B cell (primary cell): ENCODE measurements at regions of chr12 and their contacts with region 1.

Region 1: GRCh38 chr12:6927379-6928024 is at the start of gene ATN1:
- DNase-seq: peak; percentile 71
- ATAC-seq: peak; percentile 44
- H3K4me3 ChIP-seq: peak within 1 kb of the TSS; percentile 15 to 86 (median 83)
- H3K4me3 Mint-ChIP-seq: peak within 1 kb of the TSS; percentile 88
- H3K27ac ChIP-seq: peak within 1 kb of the TSS; percentile 69 to 84
- H3K27ac Mint-ChIP-seq: peak within 1 kb of the TSS; percentile 97
- H3K4me1 ChIP-seq: peaks cover 36 to 51% of the 10 kb centered on the region in 2 donors
- H3K4me1 Mint-ChIP-seq: peaks cover 56% of the 10 kb centered on the region
- H3K27me3 ChIP-seq: no peaks in the 10 kb centered on the region
- H3K27me3 Mint-ChIP-seq: no peaks in the 10 kb centered on the region
- CTCF ChIP-seq: no peak
- total RNA-seq, gene ATN1: 49.5 and 50.8 TPM in 2 replicates

Region 2: DNA sequence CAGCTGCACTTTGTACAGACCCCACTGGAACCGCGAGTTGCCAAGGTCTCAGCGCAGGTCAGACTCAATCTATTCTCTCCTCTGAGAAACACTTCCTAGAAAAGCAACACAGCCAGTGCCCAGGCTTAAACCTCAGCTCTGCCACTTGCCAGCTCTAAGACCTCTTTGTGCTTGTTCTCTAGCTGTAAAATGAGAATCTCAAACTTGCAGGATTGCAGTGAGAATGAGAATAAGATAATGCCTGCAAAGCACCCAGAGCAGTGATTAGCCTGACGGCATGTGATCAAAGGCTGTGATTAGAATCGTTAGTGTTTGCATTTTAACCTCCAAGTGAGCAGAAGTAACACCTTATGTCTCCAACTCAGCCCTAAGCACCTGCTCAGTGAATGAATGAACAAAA is 1003.8 kb before region 1 on chr12:
- CTCF ChIA-PET with region 1: no interaction called
- POLR2A ChIA-PET with region 1: no interaction called
- intact Hi-C with region 1: no loop called
- DNase-seq: no peak
- ATAC-seq: no peak
- H3K4me3 ChIP-seq: no peak overlapping the region
- H3K4me3 Mint-ChIP-seq: no peak overlapping the region
- H3K27ac ChIP-seq: no peak overlapping the region
- H3K27ac Mint-ChIP-seq: no peak overlapping the region
- H3K4me1 ChIP-seq: no peaks in the 10 kb centered on the region
- H3K4me1 Mint-ChIP-seq: no peaks in the 10 kb centered on the region
- H3K27me3 ChIP-seq: peaks cover 0 to 6% (median 0%) of the 10 kb centered on the region in 4 experiments
- H3K27me3 Mint-ChIP-seq: peaks cover 10% of the 10 kb centered on the region
- CTCF ChIP-seq: no peak

Region 3: DNA sequence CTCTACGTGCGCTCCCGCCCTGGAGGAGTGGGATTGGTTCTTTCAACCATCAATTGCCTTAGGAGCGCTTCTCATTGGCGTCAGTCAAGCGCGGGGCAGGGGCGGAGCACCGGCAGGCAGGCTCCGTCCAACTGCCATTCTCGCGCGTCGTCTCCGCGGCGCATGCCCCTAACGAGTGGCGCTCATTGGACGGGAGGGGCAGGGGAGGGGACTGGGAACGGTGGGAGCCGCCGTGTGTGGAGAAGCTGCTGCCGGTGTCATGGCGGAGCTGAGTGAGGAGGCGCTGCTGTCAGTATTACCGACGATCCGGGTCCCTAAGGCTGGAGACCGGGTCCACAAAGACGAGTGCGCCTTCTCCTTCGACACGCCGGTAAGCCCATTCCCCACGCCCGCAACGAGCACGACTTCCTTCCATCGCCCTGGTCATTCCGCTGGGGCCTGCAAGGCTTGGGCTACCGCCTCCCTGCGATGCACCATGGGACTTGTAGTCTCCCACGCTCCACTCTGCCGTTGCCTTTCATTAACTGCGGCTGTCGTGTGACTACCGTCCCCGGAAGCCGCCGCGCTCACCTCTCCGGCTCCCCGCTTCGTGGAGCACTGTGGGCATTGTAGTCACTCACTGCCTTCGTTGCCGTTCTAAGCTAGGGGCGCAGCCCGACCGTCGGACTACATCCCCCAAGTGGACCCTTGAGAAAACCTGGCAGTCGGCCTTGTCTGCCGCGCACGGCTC is 75.4 kb before region 1 on chr12 and contains the start of gene USP5:
- CTCF ChIA-PET with region 1: no interaction called
- POLR2A ChIA-PET with region 1: no interaction called
- intact Hi-C with region 1: no loop called
- DNase-seq: peak; percentile 100
- ATAC-seq: peak; percentile 76
- H3K4me3 ChIP-seq: peak within 1 kb of the TSS; percentile 85 to 98 (median 92)
- H3K4me3 Mint-ChIP-seq: peak within 1 kb of the TSS; percentile 92
- H3K27ac ChIP-seq: peak within 1 kb of the TSS; percentile 91
- H3K27ac Mint-ChIP-seq: peak within 1 kb of the TSS; percentile 93
- H3K4me1 ChIP-seq: peaks cover 6 to 23% of the 10 kb centered on the region in 2 donors
- H3K4me1 Mint-ChIP-seq: peaks cover 23% of the 10 kb centered on the region
- H3K27me3 ChIP-seq: no peaks in the 10 kb centered on the region
- H3K27me3 Mint-ChIP-seq: no peaks in the 10 kb centered on the region
- CTCF ChIP-seq: no peak
- total RNA-seq, gene USP5: 56.8 and 59.7 TPM in 2 replicates

Region 4: DNA sequence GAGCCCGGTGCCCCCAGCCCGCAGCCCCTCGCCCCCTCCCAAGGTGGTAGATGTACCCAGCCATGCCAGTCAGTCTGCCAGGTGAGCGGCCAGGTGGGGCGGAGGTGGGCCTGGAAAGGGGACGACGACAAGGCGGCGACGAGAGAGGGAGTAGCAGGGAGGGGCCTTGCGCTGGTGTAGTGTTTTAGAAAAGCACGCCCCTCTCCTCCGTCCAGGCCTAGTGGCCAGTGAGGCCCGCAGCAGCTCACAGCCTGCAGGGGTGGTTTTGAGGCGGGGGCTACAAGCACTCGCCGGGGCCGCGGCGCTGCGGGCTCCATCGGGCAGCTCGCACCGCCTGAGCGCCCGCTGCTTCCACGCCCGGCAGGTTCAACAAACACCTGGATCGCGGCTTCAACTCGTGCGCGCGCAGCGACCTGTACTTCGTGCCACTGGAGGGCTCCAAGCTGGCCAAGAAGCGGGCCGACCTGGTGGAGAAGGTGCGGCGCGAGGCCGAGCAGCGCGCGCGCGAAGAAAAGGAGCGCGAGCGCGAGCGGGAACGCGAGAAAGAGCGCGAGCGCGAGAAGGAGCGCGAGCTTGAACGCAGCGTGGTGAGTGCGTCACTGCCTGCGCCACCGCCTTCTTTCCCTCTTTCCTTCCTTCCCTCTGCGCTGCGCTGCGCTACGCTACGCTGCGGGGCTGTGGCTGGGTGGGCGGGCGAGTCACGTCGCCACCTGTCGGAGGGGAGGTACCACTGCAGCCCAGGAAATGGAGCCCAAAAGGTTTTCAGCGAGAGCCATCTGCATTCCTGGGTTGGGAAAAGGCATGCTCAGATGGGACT is 10.2 kb after region 1 on chr12:
- CTCF ChIA-PET with region 1: interaction called, 132 read pairs
- POLR2A ChIA-PET with region 1: interaction called, 37 read pairs
- intact Hi-C with region 1: loop called (anchors 1 kb)
- DNase-seq: peak; percentile 98
- ATAC-seq: peak; percentile 91
- H3K4me3 ChIP-seq: peak overlapping the region; percentile 28 to 94 (median 80)
- H3K4me3 Mint-ChIP-seq: peak overlapping the region; percentile 87
- H3K27ac ChIP-seq: peak overlapping the region; percentile 88 to 91
- H3K27ac Mint-ChIP-seq: peak overlapping the region; percentile 97
- H3K4me1 ChIP-seq: peaks cover 17 to 31% of the 10 kb centered on the region in 2 donors
- H3K4me1 Mint-ChIP-seq: peaks cover 37% of the 10 kb centered on the region
- H3K27me3 ChIP-seq: no peaks in the 10 kb centered on the region
- H3K27me3 Mint-ChIP-seq: no peaks in the 10 kb centered on the region
- CTCF ChIP-seq: peak; percentile 92

Region 5: GRCh38 chr12:6959058-6959804 is 31.7 kb after region 1 on chr12:
- CTCF ChIA-PET with region 1: interaction called, 119 read pairs
- POLR2A ChIA-PET with region 1: interaction called, 10 read pairs
- intact Hi-C with region 1: no loop called
- DNase-seq: peak; percentile 90
- ATAC-seq: peak; percentile 60
- H3K4me3 ChIP-seq: peak overlapping the region; percentile 40 to 57 (median 46)
- H3K4me3 Mint-ChIP-seq: peak overlapping the region; percentile 91
- H3K27ac ChIP-seq: peak overlapping the region; percentile 95 to 99
- H3K27ac Mint-ChIP-seq: peak overlapping the region; percentile 98
- H3K4me1 ChIP-seq: peaks cover 95 to 98% of the 10 kb centered on the region in 2 donors
- H3K4me1 Mint-ChIP-seq: peaks cover 93% of the 10 kb centered on the region
- H3K27me3 ChIP-seq: no peaks in the 10 kb centered on the region
- H3K27me3 Mint-ChIP-seq: no peaks in the 10 kb centered on the region
- CTCF ChIP-seq: no peak

Region 6: DNA sequence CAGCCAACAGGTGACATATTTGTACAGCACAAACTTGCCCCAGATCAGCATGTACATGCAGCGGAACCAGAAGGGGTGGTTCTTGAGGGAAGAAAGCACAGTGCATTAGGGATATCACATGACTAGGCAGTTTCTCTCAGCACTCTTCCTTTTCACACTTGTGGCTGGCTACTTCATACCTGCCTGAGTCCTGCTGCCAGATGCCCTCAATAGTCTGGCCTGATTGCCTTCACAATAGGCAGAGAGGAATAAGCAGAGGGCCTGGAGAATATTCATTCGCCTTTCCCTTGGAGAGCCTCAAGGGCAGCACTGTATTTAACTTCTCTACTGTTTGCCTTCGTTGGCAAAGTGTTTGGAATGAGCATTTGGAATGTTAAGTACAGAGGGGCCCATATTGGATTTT is 51.1 kb after region 1 on chr12:
- CTCF ChIA-PET with region 1: no interaction called
- POLR2A ChIA-PET with region 1: no interaction called
- intact Hi-C with region 1: no loop called
- DNase-seq: no peak
- ATAC-seq: no peak
- H3K4me3 ChIP-seq: no peak overlapping the region
- H3K4me3 Mint-ChIP-seq: no peak overlapping the region
- H3K27ac ChIP-seq: no peak overlapping the region
- H3K27ac Mint-ChIP-seq: no peak overlapping the region
- H3K4me1 ChIP-seq: no peaks in the 10 kb centered on the region
- H3K4me1 Mint-ChIP-seq: no peaks in the 10 kb centered on the region
- H3K27me3 ChIP-seq: no peaks in the 10 kb centered on the region
- H3K27me3 Mint-ChIP-seq: no peaks in the 10 kb centered on the region
- CTCF ChIP-seq: no peak

Region 7: GRCh38 chr12:7092229-7092985 is 164.9 kb after region 1 on chr12 and contains the start of gene C1R:
- CTCF ChIA-PET with region 1: interaction called, 12 read pairs
- POLR2A ChIA-PET with region 1: no interaction called
- intact Hi-C with region 1: no loop called
- DNase-seq: peak; percentile 74
- ATAC-seq: peak; percentile 78
- H3K4me3 ChIP-seq: peak within 1 kb of the TSS; percentile 15 to 61 (median 50)
- H3K4me3 Mint-ChIP-seq: peak within 1 kb of the TSS; percentile 90
- H3K27ac ChIP-seq: no peak within 1 kb of the TSS
- H3K27ac Mint-ChIP-seq: no peak within 1 kb of the TSS
- H3K4me1 ChIP-seq: peaks cover 0 to 12% of the 10 kb centered on the region in 2 donors
- H3K4me1 Mint-ChIP-seq: peaks cover 9% of the 10 kb centered on the region
- H3K27me3 ChIP-seq: peaks cover 0 to 3% (median 0%) of the 10 kb centered on the region in 4 experiments
- H3K27me3 Mint-ChIP-seq: peaks cover 4% of the 10 kb centered on the region
- CTCF ChIP-seq: peak; percentile 88
- total RNA-seq, gene C1R: 1.2 and 2.0 TPM in 2 replicates